ENCODE measurements at regions of chrX and their contacts with region 1.

Region 1: GRCh38 chrX:132615391-132616131 is 126.7 kb upstream of the MBNL3 start:
- DNase-seq: peak in 13 of 14 experiments; percentile 8 to 69 (median 19)
- ATAC-seq: peak; percentile 37
- H3K4me3 ChIP-seq: no peak overlapping the region
- H3K4me3 Mint-ChIP-seq: no peak overlapping the region
- H3K27ac ChIP-seq: no peak overlapping the region
- H3K27ac Mint-ChIP-seq: no peak overlapping the region
- H3K4me1 ChIP-seq: no peaks in the 10 kb centered on the region
- H3K4me1 Mint-ChIP-seq: no peaks in the 10 kb centered on the region
- H3K27me3 ChIP-seq: no peaks in the 10 kb centered on the region
- H3K27me3 Mint-ChIP-seq: no peaks in the 10 kb centered on the region
- CTCF ChIP-seq: peak; percentile 47

Region 2: GRCh38 chrX:131841496-131842410 is 773.8 kb before region 1 on chrX:
- CTCF ChIA-PET with region 1: no interaction called
- POLR2A ChIA-PET with region 1: no interaction called
- intact Hi-C with region 1: loop called in 1 of 2 experiments (anchors 5 kb)
- DNase-seq: peak in 7 of 14 experiments; percentile 2 to 72 (median 43)
- ATAC-seq: peak; percentile 64
- H3K4me3 ChIP-seq: no peak overlapping the region
- H3K4me3 Mint-ChIP-seq: no peak overlapping the region
- H3K27ac ChIP-seq: no peak overlapping the region
- H3K27ac Mint-ChIP-seq: no peak overlapping the region
- H3K4me1 ChIP-seq: peaks cover 6% of the 10 kb centered on the region
- H3K4me1 Mint-ChIP-seq: no peaks in the 10 kb centered on the region
- H3K27me3 ChIP-seq: no peaks in the 10 kb centered on the region
- H3K27me3 Mint-ChIP-seq: no peaks in the 10 kb centered on the region
- CTCF ChIP-seq: peak; percentile 63

Region 3: DNA sequence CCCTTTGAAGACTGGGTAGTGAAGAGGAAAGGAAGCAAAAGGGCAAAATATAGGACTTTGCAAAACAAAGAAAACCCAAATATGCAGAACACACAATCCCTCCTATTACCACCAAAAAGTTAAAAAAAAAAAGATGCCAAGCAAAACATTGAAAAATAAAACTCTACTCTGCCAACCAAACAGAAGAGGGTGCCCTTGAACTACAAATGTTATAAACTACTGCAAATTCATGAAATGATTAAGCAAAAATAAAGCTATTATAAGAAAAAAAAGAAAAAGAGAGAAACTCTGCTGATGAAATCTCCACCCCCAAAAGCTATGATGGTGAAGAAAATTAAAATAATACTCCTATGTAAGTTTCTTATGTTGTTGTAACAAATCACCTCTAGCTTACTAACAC is 761.0 kb before region 1 on chrX:
- CTCF ChIA-PET with region 1: no interaction called
- POLR2A ChIA-PET with region 1: no interaction called
- intact Hi-C with region 1: loop called in 1 of 2 experiments (anchors 5 kb)
- DNase-seq: peak in 3 of 14 experiments; percentile 28 to 47 (median 44)
- ATAC-seq: no peak
- H3K4me3 ChIP-seq: no peak overlapping the region
- H3K4me3 Mint-ChIP-seq: no peak overlapping the region
- H3K27ac ChIP-seq: no peak overlapping the region
- H3K27ac Mint-ChIP-seq: no peak overlapping the region
- H3K4me1 ChIP-seq: no peaks in the 10 kb centered on the region
- H3K4me1 Mint-ChIP-seq: no peaks in the 10 kb centered on the region
- H3K27me3 ChIP-seq: no peaks in the 10 kb centered on the region
- H3K27me3 Mint-ChIP-seq: no peaks in the 10 kb centered on the region
- CTCF ChIP-seq: peak; percentile 55

Region 4: DNA sequence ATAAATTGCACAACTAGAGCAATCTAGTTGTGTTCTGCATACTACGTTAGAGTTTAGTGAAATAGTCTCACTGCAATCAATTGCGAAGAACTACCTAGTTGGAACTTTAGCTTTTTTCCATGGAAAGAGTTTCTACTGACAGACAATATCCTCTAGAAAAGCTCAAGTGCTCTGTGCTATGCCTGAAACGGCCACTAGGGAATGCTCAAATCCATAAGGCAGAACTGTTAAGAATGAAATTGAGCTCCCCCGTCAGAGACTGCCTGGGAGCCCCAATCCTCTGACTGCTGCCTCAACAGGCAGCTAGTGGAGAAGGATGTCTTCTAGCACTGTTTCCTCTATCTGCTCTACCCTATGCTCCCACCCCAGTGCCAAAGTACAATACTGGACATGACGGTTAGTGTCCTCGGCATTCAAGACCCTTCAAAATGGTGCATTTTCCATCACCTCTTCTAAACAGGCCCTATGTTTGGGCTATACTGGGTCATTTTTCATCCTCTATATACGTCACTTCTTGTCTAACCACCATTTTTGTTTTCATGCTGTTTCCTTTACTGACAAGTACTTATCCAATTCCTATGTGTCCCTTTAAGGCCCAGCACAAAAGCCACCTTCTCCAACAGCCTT is 523.0 kb before region 1 on chrX:
- CTCF ChIA-PET with region 1: no interaction called
- POLR2A ChIA-PET with region 1: no interaction called
- intact Hi-C with region 1: loop called (anchors 5 kb)
- DNase-seq: peak; percentile 7 to 74 (median 30)
- ATAC-seq: peak; percentile 79
- H3K4me3 ChIP-seq: no peak overlapping the region
- H3K4me3 Mint-ChIP-seq: no peak overlapping the region
- H3K27ac ChIP-seq: no peak overlapping the region
- H3K27ac Mint-ChIP-seq: no peak overlapping the region
- H3K4me1 ChIP-seq: no peaks in the 10 kb centered on the region
- H3K4me1 Mint-ChIP-seq: no peaks in the 10 kb centered on the region
- H3K27me3 ChIP-seq: no peaks in the 10 kb centered on the region
- H3K27me3 Mint-ChIP-seq: no peaks in the 10 kb centered on the region
- CTCF ChIP-seq: peak; percentile 70

Region 5: DNA sequence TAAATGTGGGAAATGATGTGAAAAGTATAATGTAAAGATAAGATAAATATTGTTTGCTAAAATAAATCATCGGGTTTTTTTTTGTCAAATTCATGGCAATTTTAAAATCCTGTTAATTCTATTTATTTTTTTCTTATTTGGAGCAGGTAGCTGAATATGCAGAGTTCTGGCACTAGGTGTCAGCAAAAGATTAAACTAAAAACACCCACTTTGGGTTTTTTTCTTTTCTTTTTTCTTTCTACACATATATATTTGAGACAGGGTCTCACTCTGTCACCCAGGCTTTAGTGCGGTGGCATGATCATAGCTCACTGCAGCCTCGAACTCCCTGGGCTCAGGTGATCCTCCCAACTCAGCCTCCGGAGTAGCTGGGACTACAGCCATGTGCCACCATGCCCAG is 389.4 kb before region 1 on chrX:
- CTCF ChIA-PET with region 1: interaction called, 3 read pairs
- POLR2A ChIA-PET with region 1: no interaction called
- intact Hi-C with region 1: loop called (anchors 5 kb)
- DNase-seq: peak in 2 of 14 experiments; percentile 10 to 13
- ATAC-seq: no peak
- H3K4me3 ChIP-seq: no peak overlapping the region
- H3K4me3 Mint-ChIP-seq: no peak overlapping the region
- H3K27ac ChIP-seq: no peak overlapping the region
- H3K27ac Mint-ChIP-seq: no peak overlapping the region
- H3K4me1 ChIP-seq: no peaks in the 10 kb centered on the region
- H3K4me1 Mint-ChIP-seq: peaks cover 7% of the 10 kb centered on the region
- H3K27me3 ChIP-seq: no peaks in the 10 kb centered on the region
- H3K27me3 Mint-ChIP-seq: no peaks in the 10 kb centered on the region
- CTCF ChIP-seq: peak; percentile 13

Region 6: DNA sequence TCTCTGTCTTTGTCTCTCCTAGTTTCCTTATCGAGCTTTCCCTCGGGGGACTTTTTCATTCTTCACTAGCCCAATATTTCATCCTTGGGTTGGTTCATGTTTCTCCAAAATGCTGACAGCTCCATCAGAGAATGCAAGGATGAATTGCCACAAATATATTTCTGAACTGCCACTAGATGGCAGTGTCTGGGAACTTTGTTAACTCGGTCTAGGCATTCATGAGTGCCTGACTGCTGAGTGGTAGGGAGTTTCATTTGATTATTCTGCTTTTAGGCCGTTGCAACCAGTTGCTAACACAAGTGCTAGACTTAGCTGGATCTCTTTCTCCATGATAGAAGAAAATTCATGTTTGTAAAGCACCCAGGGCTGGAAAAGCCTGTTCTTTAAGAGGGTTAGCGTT is 322.8 kb before region 1 on chrX:
- CTCF ChIA-PET with region 1: no interaction called
- POLR2A ChIA-PET with region 1: no interaction called
- intact Hi-C with region 1: loop called (anchors 1 to 5 kb)
- DNase-seq: peak in 8 of 14 experiments; percentile 0 to 65 (median 24)
- ATAC-seq: peak; percentile 43
- H3K4me3 ChIP-seq: no peak overlapping the region
- H3K4me3 Mint-ChIP-seq: no peak overlapping the region
- H3K27ac ChIP-seq: no peak overlapping the region
- H3K27ac Mint-ChIP-seq: no peak overlapping the region
- H3K4me1 ChIP-seq: no peaks in the 10 kb centered on the region
- H3K4me1 Mint-ChIP-seq: no peaks in the 10 kb centered on the region
- H3K27me3 ChIP-seq: no peaks in the 10 kb centered on the region
- H3K27me3 Mint-ChIP-seq: no peaks in the 10 kb centered on the region
- CTCF ChIP-seq: peak; percentile 61

Region 7: DNA sequence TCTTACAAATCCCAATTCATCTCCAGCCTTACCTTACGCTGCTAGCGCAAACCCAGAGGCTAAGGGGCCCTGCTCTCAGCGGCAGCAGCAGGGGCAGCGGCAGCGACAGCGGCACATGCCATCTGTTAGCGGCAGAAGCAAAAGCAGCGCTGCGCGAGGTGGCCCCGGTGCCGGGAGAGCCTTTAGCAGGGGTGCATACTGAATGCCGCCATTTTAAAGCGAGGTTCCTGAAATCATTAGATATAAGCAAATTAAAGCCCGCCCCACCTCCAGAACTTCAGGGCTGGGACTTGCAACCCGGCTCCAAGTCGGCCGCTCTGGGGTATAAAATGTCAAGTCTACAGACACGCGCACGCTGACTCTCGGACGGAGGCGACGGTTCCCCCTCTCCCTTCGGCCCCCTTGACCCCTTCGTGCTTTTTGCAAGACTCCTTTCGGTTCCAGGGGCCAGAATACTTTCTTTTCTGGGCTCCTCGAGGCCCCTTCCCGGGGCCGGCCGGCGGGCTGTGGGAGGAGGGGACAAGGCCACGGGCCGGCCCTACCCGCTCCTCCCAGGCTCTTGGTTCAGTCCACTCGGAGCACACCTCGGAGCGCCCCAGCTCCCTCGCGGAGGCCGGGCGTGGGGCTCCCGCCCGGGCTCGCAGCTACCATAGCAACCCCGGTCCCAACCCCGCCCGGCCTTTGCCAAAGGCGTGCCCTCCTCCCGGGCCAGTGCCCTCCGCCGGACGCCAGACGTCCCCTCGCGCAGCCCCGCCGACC is 126.6 kb before region 1 on chrX and contains the start of gene MBNL3:
- CTCF ChIA-PET with region 1: no interaction called
- POLR2A ChIA-PET with region 1: no interaction called
- intact Hi-C with region 1: loop called in 1 of 2 experiments (anchors 2 kb)
- DNase-seq: peak; percentile 54 to 87 (median 67)
- ATAC-seq: peak; percentile 75
- H3K4me3 ChIP-seq: peak within 1 kb of the TSS; percentile 80
- H3K4me3 Mint-ChIP-seq: peak within 1 kb of the TSS; percentile 99
- H3K27ac ChIP-seq: peak within 1 kb of the TSS; percentile 75 to 80
- H3K27ac Mint-ChIP-seq: peak within 1 kb of the TSS; percentile 98
- H3K4me1 ChIP-seq: peaks cover 18% of the 10 kb centered on the region
- H3K4me1 Mint-ChIP-seq: peaks cover 61% of the 10 kb centered on the region
- H3K27me3 ChIP-seq: no peaks in the 10 kb centered on the region
- H3K27me3 Mint-ChIP-seq: no peaks in the 10 kb centered on the region
- CTCF ChIP-seq: no peak
- total RNA-seq, gene MBNL3: 19.0 to 19.4 TPM